ENCODE measurements at regions of chr12 and their contacts with region 1.

Region 1: DNA sequence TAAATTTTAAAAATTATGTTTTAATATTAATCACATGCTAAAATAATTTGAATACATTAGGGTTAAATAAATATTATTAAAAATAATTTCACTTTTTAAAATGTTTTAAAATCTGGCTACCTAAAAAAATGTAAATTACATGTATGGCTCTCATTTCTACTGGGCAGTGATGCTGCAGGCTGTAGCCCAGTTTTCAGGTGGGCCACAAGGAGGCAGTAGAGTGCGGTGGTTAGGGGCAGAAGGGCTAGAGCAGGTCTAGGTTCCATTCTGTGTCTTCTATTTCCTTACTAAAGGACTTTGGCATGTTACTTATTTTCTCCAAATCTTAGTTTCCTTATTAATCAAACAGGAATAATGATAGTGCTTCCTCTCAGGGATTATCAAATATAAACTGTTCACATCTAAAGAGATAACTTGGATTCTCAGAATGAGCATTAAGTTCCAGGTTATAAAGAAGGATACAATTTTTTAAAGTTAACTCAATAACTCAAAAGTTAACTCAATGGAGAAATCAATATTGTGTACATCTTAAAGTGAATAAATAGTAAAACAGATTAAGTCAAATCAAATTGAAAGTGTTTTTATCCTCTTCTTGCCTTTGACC is 54.9 kb upstream of the OVCH1 start:
- DNase-seq: peak; percentile 25
- ATAC-seq: peak; percentile 87
- H3K4me3 ChIP-seq: no peak overlapping the region
- H3K27ac ChIP-seq: no peak overlapping the region
- H3K4me1 ChIP-seq: no peaks in the 10 kb centered on the region
- H3K27me3 ChIP-seq: no peaks in the 10 kb centered on the region
- CTCF ChIP-seq: peak; percentile 80
- EP300 ChIP-seq: no peak
- POLR2A ChIP-seq: no peak
- RAD21 ChIP-seq: no peak

Region 2: GRCh38 chr12:29437575-29437974 is 114.9 kb before region 1 on chr12:
- CTCF ChIA-PET with region 1: no interaction called
- POLR2A ChIA-PET with region 1: no interaction called
- in situ Hi-C with region 1: no loop called
- intact Hi-C with region 1: no loop called
- DNase-seq: peak; percentile 34
- ATAC-seq: peak; percentile 76
- H3K4me3 ChIP-seq: no peak overlapping the region
- H3K27ac ChIP-seq: no peak overlapping the region
- H3K4me1 ChIP-seq: peaks cover 32% of the 10 kb centered on the region
- H3K27me3 ChIP-seq: no peaks in the 10 kb centered on the region
- CTCF ChIP-seq: no peak
- EP300 ChIP-seq: peak in 1 of 2 experiments; percentile 38; a peak in 1 of 4 replicates
- POLR2A ChIP-seq: no peak
- RAD21 ChIP-seq: no peak

Region 3: GRCh38 chr12:29640589-29641345 is 88.3 kb after region 1 on chr12:
- CTCF ChIA-PET with region 1: no interaction called
- POLR2A ChIA-PET with region 1: no interaction called
- in situ Hi-C with region 1: no loop called
- intact Hi-C with region 1: loop called (anchors 1 kb)
- DNase-seq: peak; percentile 63
- ATAC-seq: peak; percentile 93
- H3K4me3 ChIP-seq: peak overlapping the region; percentile 60 to 72 (median 61); a peak in 5 of 6 replicates
- H3K27ac ChIP-seq: peak overlapping the region; percentile 85
- H3K4me1 ChIP-seq: peaks cover 8% of the 10 kb centered on the region
- H3K27me3 ChIP-seq: no peaks in the 10 kb centered on the region
- CTCF ChIP-seq: peak; percentile 54
- EP300 ChIP-seq: no peak
- POLR2A ChIP-seq: peak; percentile 36 to 51
- RAD21 ChIP-seq: no peak

Region 4: DNA sequence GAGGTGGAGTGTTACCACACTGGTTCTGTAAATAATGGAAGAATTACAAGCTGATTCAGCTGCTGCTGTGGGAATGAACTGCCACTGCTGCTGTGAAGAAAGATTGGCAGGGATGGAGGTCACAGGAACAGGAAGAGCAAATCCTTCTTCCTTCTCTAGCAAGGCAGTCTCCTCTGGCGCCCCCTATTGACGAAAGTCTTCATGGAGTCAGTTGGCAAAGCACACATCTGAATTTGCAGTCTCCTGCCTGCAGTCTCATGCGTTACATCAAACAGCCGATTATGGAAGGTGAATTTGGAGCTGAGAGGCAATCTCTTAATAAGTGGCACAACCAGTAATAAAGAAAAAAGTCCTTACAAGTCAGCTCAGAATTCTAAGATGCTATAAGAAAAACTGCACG is 337.3 kb after region 1 on chr12:
- CTCF ChIA-PET with region 1: no interaction called
- POLR2A ChIA-PET with region 1: no interaction called
- in situ Hi-C with region 1: no loop called
- intact Hi-C with region 1: loop called (anchors 10 kb)
- DNase-seq: peak; percentile 4
- ATAC-seq: no peak
- H3K4me3 ChIP-seq: no peak overlapping the region
- H3K27ac ChIP-seq: no peak overlapping the region
- H3K4me1 ChIP-seq: no peaks in the 10 kb centered on the region
- H3K27me3 ChIP-seq: no peaks in the 10 kb centered on the region
- CTCF ChIP-seq: peak; percentile 44
- EP300 ChIP-seq: no peak
- POLR2A ChIP-seq: no peak
- RAD21 ChIP-seq: no peak

Region 5: DNA sequence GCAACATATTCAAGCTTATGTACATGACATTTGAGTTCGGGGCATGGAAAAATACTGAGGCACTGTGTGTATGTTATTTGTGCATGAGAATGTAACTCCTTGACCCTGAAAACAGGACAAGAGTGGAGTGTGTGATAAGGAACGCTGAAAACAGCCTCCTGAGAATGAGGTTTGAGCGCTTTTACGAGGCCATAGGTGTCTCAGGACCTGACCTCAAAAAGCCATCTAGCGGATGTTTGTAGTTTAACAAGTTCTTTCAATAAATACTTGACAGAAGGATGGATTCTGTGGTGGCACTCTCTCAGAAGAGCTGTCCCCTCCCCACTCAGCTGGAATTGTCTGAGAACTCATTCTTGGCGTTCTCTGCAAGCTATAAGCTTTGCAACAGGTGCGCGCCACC is 581.8 kb after region 1 on chr12:
- CTCF ChIA-PET with region 1: no interaction called
- POLR2A ChIA-PET with region 1: no interaction called
- in situ Hi-C with region 1: no loop called
- intact Hi-C with region 1: loop called (anchors 1 kb)
- DNase-seq: peak; percentile 24
- ATAC-seq: peak; percentile 89
- H3K4me3 ChIP-seq: no peak overlapping the region
- H3K27ac ChIP-seq: no peak overlapping the region
- H3K4me1 ChIP-seq: no peaks in the 10 kb centered on the region
- H3K27me3 ChIP-seq: no peaks in the 10 kb centered on the region
- CTCF ChIP-seq: peak; percentile 59
- EP300 ChIP-seq: no peak
- POLR2A ChIP-seq: no peak
- RAD21 ChIP-seq: no peak

Region 6: DNA sequence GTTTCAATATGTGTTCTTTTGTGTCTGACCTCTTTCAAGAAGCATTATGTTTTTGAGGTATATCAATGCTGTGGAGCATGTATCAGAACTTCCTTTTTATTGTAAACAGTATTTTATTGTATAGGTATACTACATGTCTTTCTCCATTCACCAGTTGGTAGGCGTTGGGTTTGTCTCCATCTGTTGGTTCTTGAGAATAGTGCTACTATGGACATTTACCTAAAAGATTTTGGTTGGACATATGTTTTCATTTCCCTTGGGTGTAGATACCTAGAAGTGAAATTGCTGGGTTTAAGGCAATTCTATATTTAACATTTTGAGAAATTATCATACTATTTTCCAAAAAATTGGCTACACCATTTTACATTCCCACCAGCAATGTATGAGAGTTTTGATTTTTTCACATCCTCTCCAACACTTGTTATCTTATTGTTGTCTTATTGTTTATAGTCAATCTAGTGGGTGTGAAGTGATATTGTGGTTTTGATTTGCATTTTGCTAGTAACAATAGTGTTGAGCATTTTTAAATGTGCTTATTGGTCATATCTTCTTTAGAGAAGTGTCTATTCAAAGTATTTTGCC is 734.0 kb after region 1 on chr12:
- CTCF ChIA-PET with region 1: no interaction called
- POLR2A ChIA-PET with region 1: no interaction called
- in situ Hi-C with region 1: no loop called
- intact Hi-C with region 1: loop called (anchors 10 kb)
- DNase-seq: peak; percentile 6
- ATAC-seq: no peak
- H3K4me3 ChIP-seq: no peak overlapping the region
- H3K27ac ChIP-seq: no peak overlapping the region
- H3K4me1 ChIP-seq: no peaks in the 10 kb centered on the region
- H3K27me3 ChIP-seq: no peaks in the 10 kb centered on the region
- CTCF ChIP-seq: 0 out of 2 replicates have a peak, but pooled peaks have one; percentile 28
- EP300 ChIP-seq: no peak
- POLR2A ChIP-seq: no peak
- RAD21 ChIP-seq: no peak

Region 7: GRCh38 chr12:30806989-30807694 is 1254.7 kb after region 1 on chr12:
- CTCF ChIA-PET with region 1: interaction called, 11 read pairs
- POLR2A ChIA-PET with region 1: no interaction called
- in situ Hi-C with region 1: no loop called
- intact Hi-C with region 1: loop called (anchors 1 kb)
- DNase-seq: peak; percentile 54
- ATAC-seq: peak; percentile 96
- H3K4me3 ChIP-seq: no peak overlapping the region
- H3K27ac ChIP-seq: no peak overlapping the region
- H3K4me1 ChIP-seq: peaks cover 14% of the 10 kb centered on the region
- H3K27me3 ChIP-seq: no peaks in the 10 kb centered on the region
- CTCF ChIP-seq: peak; percentile 88
- EP300 ChIP-seq: no peak
- POLR2A ChIP-seq: no peak
- RAD21 ChIP-seq: peak; percentile 83

Region 8: DNA sequence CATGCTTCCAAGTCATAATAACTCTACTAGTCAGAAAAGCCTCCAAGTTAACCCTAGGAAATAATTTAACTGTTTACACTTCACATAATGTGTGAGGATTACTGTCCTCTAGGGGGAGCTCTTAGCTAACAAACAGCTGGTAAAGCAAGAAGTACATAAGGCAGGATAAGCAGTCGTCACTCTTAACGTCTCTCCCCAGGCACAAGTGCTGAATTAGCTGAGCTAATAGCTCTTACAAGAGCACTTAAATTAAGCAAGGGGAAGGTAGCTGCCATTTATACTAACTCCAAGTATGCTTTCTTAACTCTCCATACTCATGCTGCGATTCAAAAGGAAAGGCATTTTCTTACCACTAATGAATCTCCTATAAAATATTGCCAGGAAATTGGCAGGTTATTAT is 1294.8 kb after region 1 on chr12:
- CTCF ChIA-PET with region 1: interaction called, 5 read pairs
- POLR2A ChIA-PET with region 1: no interaction called
- in situ Hi-C with region 1: loop called (anchors 25 kb)
- intact Hi-C with region 1: loop called (anchors 10 kb)
- DNase-seq: peak; percentile 66
- ATAC-seq: peak; percentile 18; the same call in 1 of the 3 replicates
- H3K4me3 ChIP-seq: no peak overlapping the region
- H3K27ac ChIP-seq: no peak overlapping the region
- H3K4me1 ChIP-seq: no peaks in the 10 kb centered on the region
- H3K27me3 ChIP-seq: no peaks in the 10 kb centered on the region
- CTCF ChIP-seq: peak; percentile 74
- EP300 ChIP-seq: no peak
- POLR2A ChIP-seq: no peak
- RAD21 ChIP-seq: peak; percentile 83

Measured in HepG2 (cell line).